WTC11 (cell line): ENCODE measurements at regions of chr10 and their contacts with region 1.

Region 1: DNA sequence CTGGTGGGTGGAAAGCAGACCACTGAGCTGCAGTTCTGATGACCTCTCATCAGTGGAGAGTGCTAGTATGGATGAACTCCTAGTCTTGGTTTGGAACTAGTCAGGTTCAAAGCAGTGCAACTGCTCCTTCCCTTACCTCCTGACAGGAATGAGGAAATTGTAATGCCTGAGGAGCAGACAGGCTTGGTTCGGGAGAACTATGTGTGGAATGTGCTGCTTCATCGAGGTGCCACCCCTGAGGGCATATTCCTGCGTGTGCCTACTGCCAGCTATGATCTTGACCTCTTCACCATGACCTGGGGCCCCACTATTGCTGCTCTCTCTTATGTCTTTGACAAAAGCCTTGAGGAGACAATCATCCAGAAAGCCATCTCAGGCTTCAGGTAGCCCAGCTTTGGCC is 27.4 kb upstream of the NFKB2 start:
- DNase-seq: no peak
- ATAC-seq: no peak
- H3K4me3 Mint-ChIP-seq: no peak overlapping the region
- H3K27ac Mint-ChIP-seq: no peak overlapping the region
- H3K4me1 Mint-ChIP-seq: no peaks in the 10 kb centered on the region
- H3K27me3 Mint-ChIP-seq: no peaks in the 10 kb centered on the region
- CTCF ChIP-seq: no peak

Region 2: DNA sequence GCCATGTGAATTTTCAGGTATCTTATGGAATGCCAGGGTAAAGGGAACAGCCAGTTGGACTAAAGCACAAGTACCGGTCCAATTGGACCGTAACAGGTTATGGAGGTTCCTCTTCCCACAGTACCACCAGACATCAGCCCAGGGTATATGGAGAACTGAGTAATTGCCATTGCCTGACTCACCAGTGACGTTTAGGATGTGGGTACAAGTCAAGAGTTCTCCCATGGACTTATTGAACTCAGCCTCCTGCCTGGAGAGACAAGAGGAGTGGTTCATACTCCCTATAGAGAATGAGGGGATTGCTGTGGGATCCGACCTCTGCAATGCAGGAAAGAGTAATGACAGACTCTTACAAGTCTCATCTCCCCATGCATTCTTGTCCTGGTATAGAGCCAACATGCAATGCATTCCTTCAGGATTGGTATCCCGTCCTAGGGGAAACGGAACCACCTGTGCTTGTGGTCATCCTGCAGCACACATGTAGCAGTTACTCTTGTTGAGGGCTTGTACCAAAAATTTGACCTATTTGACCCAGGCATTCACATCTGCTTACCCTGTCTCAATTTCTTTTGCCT is 172.7 kb before region 1 on chr10:
- CTCF ChIA-PET with region 1: no interaction called
- POLR2A ChIA-PET with region 1: interaction called, 10 read pairs
- DNase-seq: no peak
- ATAC-seq: no peak
- H3K4me3 Mint-ChIP-seq: no peak overlapping the region
- H3K27ac Mint-ChIP-seq: no peak overlapping the region
- H3K4me1 Mint-ChIP-seq: no peaks in the 10 kb centered on the region
- H3K27me3 Mint-ChIP-seq: peaks cover 46% of the 10 kb centered on the region
- CTCF ChIP-seq: no peak

Region 3: GRCh38 chr10:102461187-102462054 is 93.3 kb after region 1 on chr10:
- CTCF ChIA-PET with region 1: no interaction called
- POLR2A ChIA-PET with region 1: no interaction called
- DNase-seq: peak; percentile 98
- ATAC-seq: peak; percentile 84
- H3K4me3 Mint-ChIP-seq: peak overlapping the region; percentile 97
- H3K27ac Mint-ChIP-seq: peak overlapping the region; percentile 90
- H3K4me1 Mint-ChIP-seq: peaks cover 35% of the 10 kb centered on the region
- H3K27me3 Mint-ChIP-seq: peaks cover 2% of the 10 kb centered on the region; the same call in 1 of the 2 replicates
- CTCF ChIP-seq: no peak

Region 4: GRCh38 chr10:102540023-102540422 is 172.0 kb after region 1 on chr10:
- CTCF ChIA-PET with region 1: no interaction called
- POLR2A ChIA-PET with region 1: no interaction called
- DNase-seq: no peak
- ATAC-seq: peak; percentile 86
- H3K4me3 Mint-ChIP-seq: no peak overlapping the region
- H3K27ac Mint-ChIP-seq: no peak overlapping the region
- H3K4me1 Mint-ChIP-seq: no peaks in the 10 kb centered on the region
- H3K27me3 Mint-ChIP-seq: no peaks in the 10 kb centered on the region
- CTCF ChIP-seq: no peak

Region 5: GRCh38 chr10:102550636-102551210 is 182.7 kb after region 1 on chr10:
- CTCF ChIA-PET with region 1: no interaction called
- POLR2A ChIA-PET with region 1: no interaction called
- DNase-seq: no peak
- ATAC-seq: no peak
- H3K4me3 Mint-ChIP-seq: no peak overlapping the region
- H3K27ac Mint-ChIP-seq: no peak overlapping the region
- H3K4me1 Mint-ChIP-seq: no peaks in the 10 kb centered on the region
- H3K27me3 Mint-ChIP-seq: no peaks in the 10 kb centered on the region
- CTCF ChIP-seq: no peak